ENCODE measurements at regions of chr9 and their contacts with region 1.

Region 1: DNA sequence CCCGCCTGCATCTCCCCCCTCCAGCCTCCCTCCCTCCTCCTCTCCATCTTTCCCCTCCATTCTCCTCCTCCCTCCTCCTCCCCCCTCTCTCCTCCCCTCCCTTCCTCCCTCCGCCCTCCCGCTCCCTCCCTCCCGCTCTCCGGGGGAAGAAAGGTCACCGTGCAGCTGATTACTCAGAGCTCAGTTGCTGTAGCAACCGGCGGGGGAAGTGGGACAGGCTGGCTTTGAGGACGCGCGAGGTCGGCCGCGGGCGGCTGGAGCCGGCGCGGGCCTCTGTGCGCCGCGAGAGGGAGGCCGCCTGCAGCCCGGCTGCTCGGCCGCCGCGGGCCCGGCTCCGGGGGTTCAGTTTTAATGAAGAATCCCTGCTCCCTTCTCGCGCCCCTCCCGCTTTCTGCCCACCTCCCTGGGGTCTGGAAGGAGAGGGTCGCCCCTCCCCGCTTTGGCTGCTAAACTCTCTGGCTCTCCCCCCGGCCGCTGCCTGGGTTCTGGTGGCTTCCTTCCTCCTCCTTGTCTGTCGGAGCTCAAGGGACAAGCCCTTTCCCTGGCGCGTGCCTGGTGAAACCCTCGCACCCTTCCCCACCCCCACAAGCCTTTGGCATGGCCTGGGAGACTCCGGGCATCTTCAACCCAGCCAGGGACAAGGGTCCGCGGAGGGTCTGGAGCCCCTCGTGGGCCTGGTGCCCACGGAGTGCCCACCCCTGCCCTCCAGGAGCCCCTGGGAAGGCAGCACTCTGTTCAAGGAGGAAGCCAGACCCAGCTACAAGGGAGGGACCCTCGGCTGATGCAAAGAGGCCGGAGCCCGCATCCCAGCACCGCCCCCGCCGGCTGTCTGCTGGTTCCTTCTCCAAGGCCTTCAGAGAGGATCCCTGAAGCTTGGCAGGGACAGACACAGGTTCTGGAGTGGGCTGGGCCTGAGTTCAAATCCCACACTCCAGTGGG is 160.3 kb downstream of the C9orf50 start:
- DNase-seq: peak; percentile 100

Region 2: GRCh38 chr9:129422032-129422842 is 38.4 kb before region 1 on chr9:
- intact Hi-C with region 1: no loop called
- DNase-seq: no peak

Region 3: GRCh38 chr9:129436751-129437625 is 23.6 kb before region 1 on chr9:
- intact Hi-C with region 1: loop called (anchors 2 kb)
- DNase-seq: no peak

Measured in cardiac septum (tissue), 1 donor.